Naive thymus-derived CD8-positive, alpha-beta T cell (primary cell): ENCODE measurements at regions of chr16 and their contacts with region 1.

Region 1: DNA sequence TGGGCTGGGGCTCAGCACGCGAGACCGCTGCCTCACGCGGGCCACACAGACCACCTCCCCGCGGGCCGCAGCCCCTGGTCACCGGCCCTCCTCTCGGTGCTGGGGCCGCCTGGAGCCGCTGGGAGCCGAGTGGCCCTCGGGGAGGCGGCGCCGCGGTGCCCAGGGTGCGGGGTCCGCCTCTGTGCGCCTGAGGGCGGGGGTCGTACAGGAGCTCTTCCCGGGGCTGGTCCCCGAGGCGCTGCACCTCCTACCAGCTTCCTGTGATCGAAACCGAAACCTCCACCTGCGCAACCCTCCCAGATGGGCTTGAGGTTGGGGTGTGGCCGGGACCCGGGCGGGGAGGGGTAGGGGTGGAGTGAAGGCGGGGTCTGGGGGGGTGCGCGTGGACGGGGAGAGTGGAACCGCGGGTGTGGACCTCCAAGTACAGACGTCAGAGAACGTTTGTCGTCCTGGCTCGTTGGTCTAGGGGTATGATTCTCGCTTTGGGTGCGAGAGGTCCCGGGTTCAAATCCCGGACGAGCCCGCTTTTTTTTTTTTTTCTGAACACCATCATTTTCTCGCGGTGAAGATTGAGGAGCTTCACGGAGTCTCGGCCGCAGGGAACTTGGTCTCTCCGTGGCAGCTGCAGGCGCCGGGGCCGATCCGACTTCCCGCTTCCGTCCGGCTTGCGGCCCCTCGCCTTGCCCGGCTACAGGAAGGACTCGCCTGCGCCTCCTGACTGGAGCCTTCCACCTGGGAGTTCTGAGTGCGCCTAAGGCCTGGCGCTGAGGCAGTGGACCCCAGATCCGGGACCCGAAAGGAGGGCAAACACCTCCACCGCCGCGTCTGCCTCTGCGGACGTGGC is 23.9 kb downstream of the ZNF213 start:
- DNase-seq: peak; percentile 91 to 98 (median 94)
- ATAC-seq: peak; percentile 83 to 91
- H3K4me3 Mint-ChIP-seq: peak overlapping the region; percentile 86 to 98 (median 90)
- H3K27ac Mint-ChIP-seq: peak overlapping the region; percentile 86 to 100 (median 94)
- H3K4me1 Mint-ChIP-seq: peaks cover 17 to 32% (median 27%) of the 10 kb centered on the region in 4 donors
- H3K27me3 Mint-ChIP-seq: peaks cover 0 to 2% (median 0%) of the 10 kb centered on the region in 5 donors

Region 2: DNA sequence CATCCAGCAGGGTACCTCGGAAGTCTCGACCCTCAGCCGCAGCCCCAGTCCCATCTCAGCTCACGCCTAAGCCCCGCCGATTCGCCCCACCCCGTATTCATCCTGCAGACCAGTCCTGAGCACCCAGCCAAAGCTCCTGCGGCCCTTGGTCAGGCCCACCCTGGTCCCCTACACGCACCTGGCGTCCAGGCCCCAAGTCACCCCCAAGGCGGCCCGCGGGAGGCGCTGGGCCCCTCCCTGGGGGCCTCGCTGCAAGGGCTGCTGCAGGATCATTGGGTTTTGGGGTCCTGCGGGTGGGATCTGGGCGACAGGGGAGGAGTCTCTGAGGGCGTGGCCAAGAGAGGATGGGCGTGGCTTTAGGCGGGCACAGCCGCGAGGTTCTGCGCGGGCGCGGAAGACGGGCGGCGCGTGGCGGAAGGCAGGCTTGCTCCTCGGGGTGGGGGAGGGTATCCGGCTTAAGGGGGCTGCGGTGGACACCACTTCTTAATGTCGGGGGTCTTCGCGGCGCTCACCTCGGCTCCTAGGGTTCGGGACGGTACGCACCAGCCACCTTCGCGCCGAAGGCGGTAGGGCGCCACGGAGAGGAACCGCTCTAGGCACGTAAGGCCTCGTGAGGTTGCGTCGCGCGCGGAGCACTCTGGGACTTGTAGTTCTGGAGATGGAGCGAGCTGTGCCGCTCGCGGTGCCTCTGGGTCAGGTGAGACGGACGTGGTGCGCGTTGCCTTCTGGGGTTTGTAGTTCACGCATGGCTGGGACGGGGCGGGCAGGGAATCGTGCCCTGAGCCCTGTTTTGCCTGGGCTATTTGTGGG is 134.8 kb before region 1 on chr16 and contains the starts of genes HCFC1R1 and THOC6:
- POLR2A ChIA-PET with region 1: interaction called, 10 read pairs
- DNase-seq: peak; percentile 88 to 97 (median 94)
- ATAC-seq: peak; percentile 75 to 87
- H3K4me3 Mint-ChIP-seq: peak within 1 kb of the TSS; percentile 76 to 97 (median 92)
- H3K27ac Mint-ChIP-seq: peak within 1 kb of the TSS; percentile 81 to 99 (median 97)
- H3K4me1 Mint-ChIP-seq: peaks cover 25 to 63% (median 61%) of the 10 kb centered on the region in 4 donors
- H3K27me3 Mint-ChIP-seq: peaks cover 0 to 5% (median 2%) of the 10 kb centered on the region in 5 donors
- polyA plus RNA-seq, gene HCFC1R1: 13.1 to 16.5 (median 16.5) TPM
- polyA plus RNA-seq, gene THOC6: 45.2 to 59.0 (median 58.8) TPM

Region 3: DNA sequence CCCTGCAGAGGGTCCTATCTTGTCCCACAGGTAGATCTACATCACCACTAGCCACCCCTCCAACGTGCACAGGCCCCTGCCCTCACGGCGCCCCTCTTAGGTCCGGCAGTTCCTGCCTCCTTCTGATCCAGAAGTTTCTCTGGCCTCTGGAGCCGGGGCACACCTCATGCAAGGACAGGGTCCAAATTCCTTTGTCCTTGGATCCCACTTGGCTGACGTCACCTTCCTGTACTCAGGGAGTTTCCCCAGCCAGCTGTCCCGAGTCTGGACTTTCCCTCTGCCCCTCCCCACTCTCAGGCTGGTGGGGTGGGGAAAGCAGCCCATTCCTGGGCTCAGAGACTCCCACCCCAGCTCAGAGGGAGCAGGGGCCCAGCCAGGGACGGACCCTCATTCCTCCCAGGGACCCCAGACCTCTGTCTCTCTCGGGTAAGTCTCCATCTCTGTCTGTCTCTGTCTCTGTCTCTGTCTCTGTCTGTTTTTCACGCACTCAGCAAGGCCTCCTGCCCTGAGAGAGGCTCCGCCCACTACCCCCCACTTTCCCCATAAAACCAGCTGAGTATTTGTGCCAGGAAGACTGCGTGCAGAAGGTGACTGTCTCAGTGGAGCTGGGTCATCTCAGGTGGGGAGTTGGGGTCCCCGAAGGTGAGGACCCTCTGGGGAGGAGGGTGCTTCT is 93.5 kb before region 1 on chr16 and contains the start of gene IL32:
- POLR2A ChIA-PET with region 1: interaction called, 14 read pairs
- DNase-seq: peak in 9 of 10 donors; percentile 38 to 73 (median 59)
- ATAC-seq: peak; percentile 55
- H3K4me3 Mint-ChIP-seq: peak within 1 kb of the TSS; percentile 97 to 100 (median 100)
- H3K27ac Mint-ChIP-seq: peak within 1 kb of the TSS; percentile 97 to 100 (median 98)
- H3K4me1 Mint-ChIP-seq: peaks cover 29 to 69% (median 63%) of the 10 kb centered on the region in 4 donors
- H3K27me3 Mint-ChIP-seq: no peaks in the 10 kb centered on the region
- polyA plus RNA-seq, gene IL32: 1,686 to 2,118 (median 1,952) TPM

Region 4: DNA sequence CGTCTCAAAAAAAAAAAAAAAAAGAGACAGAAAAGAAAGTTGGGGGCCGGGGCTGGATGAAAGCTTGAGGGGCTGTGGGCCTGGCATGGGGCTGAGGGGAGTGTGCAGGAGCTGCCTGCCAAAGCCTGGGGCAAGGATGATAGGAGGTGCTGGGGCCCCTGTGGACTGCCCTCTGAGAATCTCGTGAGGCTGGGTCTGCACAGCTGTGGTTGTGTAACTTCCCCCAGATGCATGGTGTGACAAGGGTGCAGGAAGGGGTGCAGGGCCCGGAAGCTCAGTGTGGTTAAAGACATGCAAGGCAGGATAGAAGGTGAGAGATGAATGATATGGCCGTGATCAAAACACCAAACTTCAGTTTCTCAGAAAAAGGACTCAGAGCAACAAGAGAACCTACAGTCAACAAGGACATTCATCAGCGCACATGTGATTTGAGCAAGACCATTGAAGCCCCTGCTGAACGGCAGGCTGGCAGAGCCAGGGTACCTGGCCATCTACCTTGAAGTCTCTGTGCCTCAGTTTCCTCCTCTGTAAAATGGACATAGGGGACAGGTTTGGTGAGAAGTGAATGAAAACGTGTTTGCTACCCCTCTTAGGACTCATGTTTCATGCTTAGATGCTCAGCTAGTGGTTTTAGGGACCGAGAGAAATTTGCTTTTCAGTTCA is 83.7 kb before region 1 on chr16:
- POLR2A ChIA-PET with region 1: interaction called, 19 read pairs
- DNase-seq: peak; percentile 37 to 93 (median 82)
- ATAC-seq: peak; percentile 91 to 96
- H3K4me3 Mint-ChIP-seq: peak overlapping the region; percentile 58 to 89 (median 82)
- H3K27ac Mint-ChIP-seq: peak overlapping the region; percentile 92 to 100 (median 98)
- H3K4me1 Mint-ChIP-seq: peaks cover 53 to 89% (median 87%) of the 10 kb centered on the region in 4 donors
- H3K27me3 Mint-ChIP-seq: no peaks in the 10 kb centered on the region

Region 5: DNA sequence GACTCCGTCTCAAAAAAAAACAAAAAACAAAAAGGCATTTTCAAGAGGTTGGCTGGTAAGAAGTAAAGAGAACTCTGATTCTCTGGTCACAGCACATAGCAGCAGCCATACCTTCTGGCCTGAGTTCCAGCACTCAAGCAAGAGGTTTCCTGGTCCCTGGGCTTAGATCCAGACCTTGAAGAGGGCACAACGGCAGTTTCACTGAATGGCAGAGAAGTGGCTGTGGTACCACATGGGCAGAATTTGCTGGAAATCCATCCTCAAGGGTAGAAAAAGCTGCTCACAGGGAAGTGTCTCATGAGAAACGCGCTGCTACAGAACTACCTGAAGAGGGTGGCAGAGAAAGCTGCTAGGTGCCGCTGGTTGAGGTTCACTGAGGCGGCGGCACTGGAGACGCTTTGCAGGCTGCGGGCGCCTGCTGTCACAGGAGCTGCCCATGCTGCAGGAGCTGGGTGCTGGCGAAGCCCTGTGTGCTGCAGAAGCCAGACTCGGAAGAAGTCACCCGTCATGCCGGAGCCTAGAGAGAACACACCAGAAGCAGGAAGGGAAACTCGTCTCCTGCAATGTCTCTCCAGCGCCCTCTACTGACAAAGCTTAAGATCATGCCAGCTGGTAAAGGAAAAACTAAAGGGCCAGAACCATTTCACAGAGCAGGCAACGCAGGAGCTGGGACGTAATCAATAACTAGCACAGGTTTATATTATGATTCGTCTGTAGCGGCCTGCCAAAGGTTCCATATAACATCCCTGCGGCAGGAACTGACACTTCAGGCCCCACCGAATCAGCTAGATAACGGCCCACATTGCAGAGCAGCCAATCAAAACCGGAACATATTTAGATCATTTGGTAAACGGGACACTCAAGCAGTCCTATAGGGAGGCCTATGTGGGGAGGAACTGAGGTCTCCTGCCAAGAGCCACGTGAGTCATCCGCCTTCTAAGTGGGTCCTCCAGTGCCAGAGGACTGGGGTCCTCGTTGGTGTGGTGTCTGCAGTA is 29.3 kb before region 1 on chr16:
- POLR2A ChIA-PET with region 1: interaction called, 81 read pairs
- DNase-seq: peak; percentile 56 to 92 (median 82)
- ATAC-seq: peak; percentile 74
- H3K4me3 Mint-ChIP-seq: peak overlapping the region; percentile 90 to 96 (median 92)
- H3K27ac Mint-ChIP-seq: peak overlapping the region; percentile 76 to 95 (median 90)
- H3K4me1 Mint-ChIP-seq: peaks cover 27 to 66% (median 54%) of the 10 kb centered on the region in 4 donors
- H3K27me3 Mint-ChIP-seq: no peaks in the 10 kb centered on the region

Region 6: GRCh38 chr16:3134564-3135417 is 23.9 kb before region 1 on chr16 and contains the start of gene ZNF213:
- POLR2A ChIA-PET with region 1: interaction called, 81 read pairs
- DNase-seq: peak; percentile 80 to 98 (median 93)
- ATAC-seq: peak; percentile 97 to 98
- H3K4me3 Mint-ChIP-seq: peak within 1 kb of the TSS; percentile 89 to 99 (median 98)
- H3K27ac Mint-ChIP-seq: peak within 1 kb of the TSS; percentile 93 to 100 (median 99)
- H3K4me1 Mint-ChIP-seq: peaks cover 8 to 39% (median 34%) of the 10 kb centered on the region in 4 donors
- H3K27me3 Mint-ChIP-seq: no peaks in the 10 kb centered on the region
- polyA plus RNA-seq, gene ZNF213: 0.27 to 2.5 (median 0.90) TPM

Region 7: DNA sequence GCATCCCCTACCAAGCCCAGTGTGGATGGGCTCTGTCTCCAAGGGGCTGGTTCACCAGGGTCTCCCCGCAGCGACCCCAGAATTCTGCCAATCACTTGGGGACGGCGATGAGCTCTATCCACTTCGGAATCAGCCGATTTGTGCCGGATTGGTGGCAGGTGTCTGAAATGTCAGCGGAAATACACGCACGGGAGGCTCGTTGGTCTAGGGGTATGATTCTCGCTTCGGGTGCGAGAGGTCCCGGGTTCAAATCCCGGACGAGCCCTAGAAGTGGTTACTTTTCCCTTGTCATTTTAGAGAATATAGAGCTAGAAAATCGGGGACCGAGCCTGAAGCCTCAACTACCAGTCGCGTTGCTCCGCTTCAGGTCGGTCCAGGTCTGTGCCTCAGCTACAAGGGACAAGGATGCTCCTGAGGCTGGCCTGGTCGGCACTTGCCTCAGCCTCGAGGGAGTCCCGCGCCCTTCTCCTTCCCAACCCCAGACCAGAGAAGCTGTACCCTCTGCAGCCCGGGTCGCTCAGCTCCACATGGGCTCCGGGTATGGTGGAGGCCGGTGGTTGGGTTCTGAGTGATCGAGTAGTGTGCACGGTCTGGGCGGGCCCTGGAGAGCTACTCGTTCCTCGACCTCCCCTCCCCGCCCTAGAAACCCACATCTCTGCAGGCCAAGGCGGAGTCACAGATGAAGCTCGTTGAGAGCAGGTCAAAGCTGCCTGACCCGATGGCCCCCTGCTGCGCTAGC is 13.3 kb after region 1 on chr16:
- POLR2A ChIA-PET with region 1: interaction called, 28 read pairs
- DNase-seq: peak in 3 of 10 donors; percentile 45 to 51 (median 51)
- ATAC-seq: peak; percentile 3 to 48
- H3K4me3 Mint-ChIP-seq: peak overlapping the region; percentile 74 to 89 (median 84)
- H3K27ac Mint-ChIP-seq: peak overlapping the region in 7 of 10 donors; percentile 12 to 88 (median 58)
- H3K4me1 Mint-ChIP-seq: peaks cover 20 to 38% (median 34%) of the 10 kb centered on the region in 4 donors
- H3K27me3 Mint-ChIP-seq: peaks cover 25 to 52% (median 42%) of the 10 kb centered on the region in 5 donors